GM10248 (cell line): ENCODE measurements at regions of chr11 and their contacts with region 1.

Region 1: DNA sequence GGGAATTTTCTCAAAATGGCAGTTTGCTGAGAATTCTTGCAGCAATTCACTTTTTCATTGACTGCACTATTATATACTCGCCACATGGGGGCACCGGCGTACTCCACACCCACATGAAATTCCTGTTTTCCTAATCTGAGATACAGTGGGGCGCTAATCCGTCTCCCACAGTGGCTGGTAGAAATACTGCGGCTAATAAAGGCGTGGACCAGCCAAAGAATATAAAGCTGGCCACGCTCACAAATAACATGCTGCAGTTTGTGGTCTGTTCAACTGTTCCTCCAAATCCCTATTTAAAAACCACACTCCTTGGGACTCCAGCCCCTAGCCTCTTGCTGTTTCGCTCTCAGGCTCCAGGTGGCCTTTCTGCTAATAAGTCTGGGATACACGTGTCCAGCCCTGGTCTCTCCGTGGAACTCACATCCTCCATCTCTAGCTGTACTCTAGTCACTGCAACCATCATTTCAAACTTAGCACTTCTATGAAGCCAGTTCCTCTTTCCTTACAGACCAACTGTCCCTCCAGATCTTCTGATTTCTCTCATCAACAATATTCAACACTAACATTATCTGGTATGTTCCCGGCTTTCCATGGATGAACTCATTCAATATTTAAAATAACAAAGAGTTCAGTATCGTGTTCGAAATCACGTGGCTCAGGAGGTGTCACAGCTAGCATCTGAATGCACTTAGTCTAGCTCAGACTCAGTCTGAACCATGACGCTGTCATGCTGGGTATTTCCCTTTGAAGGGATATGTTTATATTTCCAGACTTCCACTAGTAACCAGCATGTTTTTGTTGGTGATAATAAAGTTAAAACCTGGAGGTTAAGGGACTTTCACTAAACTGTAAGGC is 22.0 kb downstream of the TBRG1 start:
- DNase-seq: peak; percentile 55
- CTCF ChIP-seq: peak; percentile 75

Region 2: DNA sequence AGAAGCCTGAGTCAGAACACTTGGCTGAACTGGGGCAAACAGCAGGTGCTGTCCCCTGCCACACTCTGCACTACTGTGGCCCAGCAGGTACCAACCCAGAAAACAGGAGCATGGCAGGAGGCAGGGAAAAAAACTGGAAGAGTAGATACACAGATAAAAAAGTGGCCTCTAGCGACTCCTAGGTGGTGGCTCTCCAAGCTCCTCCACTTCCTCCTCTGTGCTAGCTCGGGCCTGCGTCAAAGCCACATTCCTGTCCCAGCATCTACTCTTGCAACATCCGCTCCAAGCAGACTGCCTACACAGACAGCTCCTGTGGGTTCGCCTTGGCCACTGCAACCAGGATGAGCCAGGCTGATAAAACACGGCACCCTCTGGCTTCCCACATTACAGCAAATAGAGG is 108.1 kb before region 1 on chr11:
- CTCF ChIA-PET with region 1: no interaction called
- POLR2A ChIA-PET with region 1: no interaction called
- DNase-seq: no peak
- CTCF ChIP-seq: no peak

Region 3: GRCh38 chr11:124622531-124623451 is 21.9 kb before region 1 on chr11 and contains the start of gene TBRG1:
- CTCF ChIA-PET with region 1: interaction called, 30 read pairs
- POLR2A ChIA-PET with region 1: no interaction called
- DNase-seq: peak; percentile 92
- CTCF ChIP-seq: no peak

Region 4: DNA sequence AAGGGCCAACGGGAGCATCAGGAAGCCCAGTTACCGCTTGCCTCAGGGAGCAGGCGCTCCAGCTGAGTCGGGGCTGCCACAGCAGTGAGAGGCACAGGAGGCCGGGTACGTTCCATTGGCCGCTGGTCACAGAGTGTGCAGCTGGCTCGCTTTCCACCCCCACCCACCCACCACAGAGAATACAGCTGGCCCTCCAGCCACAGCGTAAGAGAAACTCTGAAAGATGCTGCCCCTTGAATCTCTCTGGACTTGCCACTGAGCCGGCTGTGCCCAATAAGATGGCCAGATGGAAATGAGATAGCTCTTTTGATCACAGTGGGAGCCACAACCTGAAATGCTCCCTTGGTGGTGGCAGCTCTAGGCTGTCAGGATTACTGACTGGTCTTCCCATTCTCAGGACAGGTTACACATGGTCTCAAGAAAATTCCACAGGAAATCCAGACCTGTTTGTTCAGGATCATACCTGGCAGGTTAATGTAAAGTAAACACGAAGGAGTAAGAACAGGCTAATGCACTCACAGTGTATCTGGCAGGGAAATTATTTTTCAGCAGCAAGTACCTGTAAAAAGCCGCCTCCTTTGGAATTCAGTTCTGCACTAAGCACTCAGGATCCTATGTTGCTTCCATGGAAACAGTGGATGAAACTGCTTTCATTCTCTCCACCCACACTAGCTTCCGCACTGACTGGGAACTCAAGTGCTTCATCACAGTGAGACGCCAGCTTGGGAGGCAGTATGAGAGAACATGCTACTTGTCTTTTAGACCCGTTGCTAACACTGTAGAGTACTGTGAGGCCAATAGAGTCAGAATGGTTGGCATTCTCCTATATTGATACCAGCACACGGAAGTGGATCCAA is 12.3 kb after region 1 on chr11:
- CTCF ChIA-PET with region 1: interaction called, 19 read pairs
- POLR2A ChIA-PET with region 1: no interaction called
- DNase-seq: no peak
- CTCF ChIP-seq: no peak

Region 5: DNA sequence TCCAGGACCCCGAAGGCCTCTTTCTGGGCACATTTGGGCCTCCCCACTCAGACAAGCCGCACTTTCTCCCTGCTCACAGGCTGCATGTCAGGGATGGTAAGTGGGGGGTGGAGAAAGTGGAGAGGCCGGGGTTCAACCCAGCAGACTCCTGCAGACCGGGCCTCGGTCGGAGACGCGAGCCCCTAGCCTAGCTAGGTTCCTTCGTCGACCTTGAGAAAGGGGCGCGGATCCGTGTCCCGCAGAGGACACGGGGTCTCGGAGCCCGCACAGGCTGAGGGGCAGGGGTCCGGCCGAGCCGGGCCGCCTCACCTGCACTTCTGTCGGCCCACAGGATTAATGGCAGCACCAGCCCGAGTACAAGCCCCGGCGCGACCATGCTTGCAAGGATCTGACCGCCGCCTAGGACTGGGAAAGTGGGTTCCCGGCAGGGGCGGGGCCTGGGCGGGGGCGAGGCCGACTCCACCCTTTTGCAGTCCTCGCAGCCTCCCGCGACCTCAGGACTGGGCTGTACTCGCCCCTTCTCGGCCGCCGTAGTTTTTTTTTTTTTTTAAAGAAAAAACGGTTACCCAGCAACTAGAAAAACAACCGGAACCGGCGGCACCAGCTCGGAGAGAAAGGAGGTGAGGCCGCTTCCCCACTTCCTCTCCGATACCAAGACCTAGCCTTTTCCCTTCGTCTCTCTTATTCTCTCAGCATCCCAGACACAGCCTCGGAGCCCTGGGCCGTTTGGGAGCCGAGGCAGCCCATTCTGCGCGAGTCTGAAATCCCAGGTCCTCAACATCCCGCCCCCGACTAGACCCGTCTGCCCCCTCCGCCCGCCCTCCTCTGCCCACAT is 28.9 kb after region 1 on chr11 and contains the starts of genes SIAE and SPA17:
- CTCF ChIA-PET with region 1: interaction called, 19 read pairs
- POLR2A ChIA-PET with region 1: no interaction called
- DNase-seq: peak; percentile 96
- CTCF ChIP-seq: no peak

Region 6: GRCh38 chr11:124793466-124794278 is 149.0 kb after region 1 on chr11:
- CTCF ChIA-PET with region 1: interaction called, 15 read pairs
- POLR2A ChIA-PET with region 1: no interaction called
- DNase-seq: peak; percentile 50
- CTCF ChIP-seq: peak; percentile 77

Region 7: DNA sequence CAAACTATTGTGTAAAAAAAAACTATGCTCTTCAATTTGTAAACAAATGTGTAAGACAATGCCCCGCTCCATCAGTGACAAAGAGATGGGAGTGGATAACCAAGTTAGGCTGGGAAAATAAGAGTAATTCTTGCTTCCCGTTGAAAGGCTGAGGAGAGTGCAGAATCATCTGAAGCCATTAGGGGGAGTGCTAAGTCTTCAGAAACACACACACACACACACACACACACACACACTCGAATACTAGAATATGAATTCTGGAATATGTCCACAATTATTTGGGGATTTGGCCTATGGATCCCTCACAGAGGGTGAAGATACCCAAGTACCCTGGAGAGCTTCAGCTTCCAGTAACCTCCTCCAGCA is 192.8 kb after region 1 on chr11:
- CTCF ChIA-PET with region 1: interaction called, 14 read pairs
- POLR2A ChIA-PET with region 1: no interaction called
- DNase-seq: peak; percentile 44
- CTCF ChIP-seq: peak; percentile 69

Region 8: DNA sequence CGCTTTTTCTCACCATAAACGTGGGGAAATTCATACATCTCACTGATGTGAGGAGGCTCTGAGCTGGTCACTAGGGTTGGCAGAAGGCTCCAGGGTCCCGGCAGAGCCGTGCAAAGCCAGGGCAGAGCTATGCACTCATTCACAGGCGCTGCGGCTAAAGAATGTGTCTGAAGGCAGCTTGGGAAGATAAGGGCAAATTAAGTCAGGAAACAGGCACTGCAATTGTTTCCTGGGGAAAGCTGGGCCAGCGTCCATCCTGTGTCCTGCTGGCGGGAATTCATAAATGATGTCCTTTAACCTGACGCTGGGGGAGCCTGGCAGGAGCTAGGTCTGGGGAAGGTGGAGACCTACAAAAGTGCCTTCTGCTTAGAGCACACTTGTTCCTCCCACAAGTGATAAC is 547.5 kb after region 1 on chr11:
- CTCF ChIA-PET with region 1: no interaction called
- POLR2A ChIA-PET with region 1: no interaction called
- DNase-seq: no peak
- CTCF ChIP-seq: no peak

Region 9: DNA sequence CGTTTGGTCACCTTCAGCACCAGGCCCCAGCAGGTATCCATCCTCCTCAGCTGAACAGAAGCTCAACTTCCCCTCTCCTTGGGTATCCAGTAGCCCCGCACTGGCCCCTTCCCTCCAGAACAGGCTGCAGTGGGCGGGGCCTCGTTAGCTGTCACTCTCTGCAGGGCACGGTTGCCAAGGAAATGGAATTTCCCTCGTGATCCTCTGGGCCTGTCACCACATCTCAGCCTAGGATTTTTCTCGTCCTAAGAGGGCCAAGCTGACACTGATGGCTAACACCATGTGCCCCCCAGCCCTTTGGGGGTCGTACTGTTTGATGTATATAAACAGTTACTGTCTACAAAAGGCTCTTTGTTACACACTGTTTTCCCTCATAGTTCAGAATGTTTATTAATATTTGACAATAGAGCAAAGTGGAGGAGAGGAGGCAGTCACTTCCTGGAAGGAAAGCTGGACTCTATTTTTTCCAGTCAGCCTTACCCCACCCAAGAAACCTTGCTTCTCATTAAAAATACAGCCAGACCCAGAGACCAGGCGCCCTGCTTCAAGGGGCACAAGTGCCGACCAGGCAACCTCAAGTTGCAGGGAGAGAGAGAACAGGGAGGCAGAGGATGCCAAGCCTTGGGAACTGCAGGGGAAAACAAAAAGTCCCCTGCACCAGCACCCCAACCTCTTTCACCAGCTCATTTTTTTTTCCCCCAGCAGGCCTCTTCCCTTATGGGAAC is 806.9 kb after region 1 on chr11:
- CTCF ChIA-PET with region 1: no interaction called
- POLR2A ChIA-PET with region 1: no interaction called
- DNase-seq: peak; percentile 52
- CTCF ChIP-seq: no peak